Lower leg skin (tissue), 4 donors: ENCODE measurements at regions of chr5 and their contacts with region 1.

Region 1: DNA sequence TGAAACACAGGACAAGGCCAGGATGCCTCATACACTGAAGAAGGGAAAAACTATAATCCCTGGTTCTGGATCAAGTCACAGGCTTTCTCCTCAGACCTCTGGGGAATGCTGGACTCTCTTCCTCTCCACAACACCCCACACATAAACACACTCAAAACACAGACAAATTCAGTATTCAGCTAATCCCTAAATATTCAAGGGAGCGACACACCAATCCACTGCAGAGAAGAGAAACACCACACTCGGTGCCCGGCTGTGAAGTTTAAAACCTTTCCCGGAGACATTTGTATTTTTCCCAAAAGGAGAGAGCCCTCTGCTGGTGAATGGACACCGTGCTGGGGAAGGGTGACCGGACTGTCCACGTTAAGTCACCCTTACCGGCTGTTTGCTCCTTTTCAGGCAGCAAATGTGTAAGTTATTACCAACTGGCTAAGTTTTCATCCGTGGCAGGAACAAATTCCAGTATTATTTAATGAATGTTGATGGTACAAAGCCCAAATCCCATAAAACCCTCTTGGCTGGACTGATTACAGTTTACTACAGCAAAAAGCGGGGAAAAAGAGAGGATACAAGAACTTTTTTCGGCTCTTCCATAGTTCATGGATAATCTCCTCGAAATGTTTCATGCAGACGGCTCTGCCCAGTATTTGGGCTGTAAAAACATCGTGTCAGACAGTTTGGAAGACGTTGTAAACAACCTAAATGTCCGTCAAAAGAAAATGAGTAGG is 130.9 kb upstream of the SLC30A5 start:
- DNase-seq: peak; percentile 80 to 93
- H3K4me3 ChIP-seq: no peak overlapping the region
- CTCF ChIP-seq: peak in 1 of 3 donors; percentile 55
- POLR2A ChIP-seq: no peak

Region 2: DNA sequence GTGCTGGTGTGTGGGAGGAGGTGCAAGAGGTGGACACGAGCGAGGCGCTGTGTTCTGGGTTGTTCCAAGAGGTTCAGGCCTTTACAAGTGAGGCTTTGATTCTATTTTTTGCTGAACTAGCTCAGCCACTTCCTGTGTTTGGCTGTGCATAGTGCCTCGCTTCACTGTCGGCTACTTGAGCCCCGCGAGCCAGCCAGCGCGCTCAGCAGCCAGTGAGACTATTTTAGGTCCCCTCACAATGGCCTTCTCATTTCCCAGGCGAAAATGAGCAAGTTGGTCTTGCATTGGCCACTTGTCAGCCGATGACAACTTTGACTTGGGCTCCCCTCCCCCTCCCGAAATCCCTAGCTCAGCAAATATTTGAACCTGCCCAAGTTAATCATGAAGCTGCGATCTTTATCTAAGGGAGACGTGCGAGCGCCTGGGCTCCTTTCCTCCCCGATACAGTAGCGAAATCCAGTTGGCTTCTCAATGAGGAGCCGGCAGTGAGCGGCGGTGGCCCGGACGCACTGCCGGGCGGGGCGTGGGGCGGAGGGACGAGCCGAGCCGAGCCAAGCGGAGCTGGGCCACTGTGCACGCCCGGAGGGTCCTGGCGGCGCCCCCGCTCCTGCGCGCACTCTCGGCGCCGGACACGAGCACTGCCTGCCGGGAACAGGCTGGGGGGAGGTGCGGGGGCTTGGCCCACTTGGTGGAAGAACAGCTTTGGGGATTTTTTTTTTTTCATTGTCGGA is 674.8 kb before region 1 on chr5:
- intact Hi-C with region 1: loop called (anchors 5 kb)
- DNase-seq: peak; percentile 48 to 91
- H3K4me3 ChIP-seq: peak overlapping the region; percentile 39
- CTCF ChIP-seq: no peak
- POLR2A ChIP-seq: no peak

Region 3: GRCh38 chr5:68576805-68577204 is 386.1 kb before region 1 on chr5:
- intact Hi-C with region 1: no loop called
- DNase-seq: no peak
- H3K4me3 ChIP-seq: no peak overlapping the region
- CTCF ChIP-seq: no peak
- POLR2A ChIP-seq: no peak